ENCODE measurements at regions of chr5 and their contacts with region 1.

Region 1: DNA sequence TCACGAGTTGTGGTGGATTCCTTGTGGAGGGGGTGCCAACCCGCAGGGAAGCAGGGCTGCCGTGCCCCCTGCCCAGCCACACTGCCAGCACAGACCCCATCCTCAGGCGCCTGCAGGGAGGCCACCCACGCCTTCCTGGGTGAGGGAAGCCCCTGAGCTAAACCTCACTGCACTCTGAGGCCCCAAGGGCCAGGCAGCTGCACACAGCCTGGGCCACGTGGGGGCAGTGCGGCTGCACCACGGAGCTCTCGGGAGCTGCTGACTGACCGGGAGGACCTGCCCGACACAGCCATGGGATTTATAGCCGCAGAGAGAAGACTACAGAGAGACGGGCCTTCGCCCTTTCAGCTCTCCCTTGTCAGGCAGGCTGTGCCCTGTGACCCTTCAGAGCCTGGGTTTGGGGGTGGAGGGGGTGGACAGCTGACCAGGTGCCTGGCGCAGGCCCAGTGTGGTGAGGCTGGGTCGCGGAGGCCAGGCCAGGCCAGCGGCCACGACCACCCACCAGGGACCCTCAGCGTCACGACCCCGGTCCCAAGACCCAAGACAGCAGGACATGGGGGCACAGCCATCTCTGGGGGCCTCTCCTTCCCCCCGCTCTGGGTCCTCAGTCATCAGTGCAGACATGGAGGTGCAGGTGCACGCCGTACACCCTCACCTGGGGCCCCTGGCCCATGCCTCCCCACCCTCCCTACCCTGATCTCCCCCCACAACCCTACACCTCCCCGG is 4.3 kb upstream of the AHRR start:
- DNase-seq: peak in 5 of 9 experiments; percentile 40 to 67 (median 41)
- ATAC-seq: peak; percentile 73
- H3K4me3 ChIP-seq: no peak overlapping the region
- H3K4me3 Mint-ChIP-seq: no peak overlapping the region
- H3K27ac ChIP-seq: no peak overlapping the region
- H3K27ac Mint-ChIP-seq: no peak overlapping the region
- H3K4me1 ChIP-seq: peaks cover 5% of the 10 kb centered on the region
- H3K4me1 Mint-ChIP-seq: peaks cover 11% of the 10 kb centered on the region
- H3K27me3 ChIP-seq: peaks cover 9 to 16% of the 10 kb centered on the region in 2 experiments
- H3K27me3 Mint-ChIP-seq: peaks cover 11% of the 10 kb centered on the region
- CTCF ChIP-seq: peak; percentile 27

Region 2: DNA sequence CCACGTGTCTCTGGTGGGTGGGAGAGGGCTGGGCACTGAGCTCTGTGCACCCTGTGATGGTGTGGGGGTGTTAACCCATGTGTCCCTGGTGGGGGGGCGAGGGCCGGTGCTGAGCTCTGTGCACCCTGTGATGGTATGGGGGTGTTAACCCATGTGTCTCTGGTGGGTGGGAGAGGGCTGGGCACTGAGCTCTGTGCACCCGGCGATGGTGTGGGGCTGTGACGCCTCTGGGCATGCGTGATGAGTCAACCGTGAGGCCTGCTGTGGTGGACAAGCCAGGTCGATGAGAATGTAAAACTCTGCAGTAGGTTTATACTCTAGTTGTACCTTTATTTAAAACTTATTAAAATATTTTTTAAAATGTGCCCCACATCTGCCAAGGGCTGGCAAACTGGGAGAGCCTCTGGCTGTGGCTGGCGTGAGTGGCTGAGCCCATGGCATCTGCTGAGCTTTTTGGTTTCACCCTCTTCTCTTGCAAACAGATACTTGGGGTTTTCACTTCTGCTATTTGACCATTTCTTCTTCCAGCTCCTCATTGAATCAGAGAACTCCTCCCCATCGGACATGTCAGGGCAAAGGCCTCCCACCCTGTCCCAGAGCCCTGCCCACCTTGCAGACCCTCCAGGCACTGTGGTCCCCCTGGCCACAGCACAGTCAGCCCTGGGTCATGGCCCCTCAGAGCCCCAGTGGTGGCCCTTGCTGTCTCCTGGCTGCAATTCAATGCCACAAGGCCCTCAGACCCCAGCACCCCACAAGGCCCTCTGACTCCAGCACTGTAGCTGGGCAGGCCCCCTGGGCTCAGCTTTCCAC is 107.3 kb after region 1 on chr5:
- CTCF ChIA-PET with region 1: interaction called, 10 read pairs
- POLR2A ChIA-PET with region 1: no interaction called
- intact Hi-C with region 1: loop called in 1 of 2 experiments (anchors 1 kb)
- DNase-seq: no peak
- ATAC-seq: no peak
- H3K4me3 ChIP-seq: no peak overlapping the region
- H3K4me3 Mint-ChIP-seq: no peak overlapping the region
- H3K27ac ChIP-seq: no peak overlapping the region
- H3K27ac Mint-ChIP-seq: no peak overlapping the region
- H3K4me1 ChIP-seq: no peaks in the 10 kb centered on the region
- H3K4me1 Mint-ChIP-seq: no peaks in the 10 kb centered on the region
- H3K27me3 ChIP-seq: no peaks in the 10 kb centered on the region
- H3K27me3 Mint-ChIP-seq: peaks cover 7% of the 10 kb centered on the region
- CTCF ChIP-seq: no peak

Region 3: GRCh38 chr5:431001-431710 is 113.9 kb after region 1 on chr5:
- CTCF ChIA-PET with region 1: interaction called, 10 read pairs
- POLR2A ChIA-PET with region 1: no interaction called
- intact Hi-C with region 1: loop called in 1 of 2 experiments (anchors 2 kb)
- DNase-seq: peak in 8 of 9 experiments; percentile 10 to 64 (median 44)
- ATAC-seq: peak; percentile 59
- H3K4me3 ChIP-seq: no peak overlapping the region
- H3K4me3 Mint-ChIP-seq: no peak overlapping the region
- H3K27ac ChIP-seq: no peak overlapping the region
- H3K27ac Mint-ChIP-seq: no peak overlapping the region
- H3K4me1 ChIP-seq: no peaks in the 10 kb centered on the region
- H3K4me1 Mint-ChIP-seq: no peaks in the 10 kb centered on the region
- H3K27me3 ChIP-seq: no peaks in the 10 kb centered on the region
- H3K27me3 Mint-ChIP-seq: peaks cover 8% of the 10 kb centered on the region
- CTCF ChIP-seq: peak; percentile 60

Region 4: GRCh38 chr5:902129-902916 is 585.1 kb after region 1 on chr5:
- CTCF ChIA-PET with region 1: no interaction called
- POLR2A ChIA-PET with region 1: no interaction called
- intact Hi-C with region 1: loop called in 1 of 2 experiments (anchors 5 kb)
- DNase-seq: peak in 1 of 9 experiments; percentile 37
- ATAC-seq: no peak
- H3K4me3 ChIP-seq: no peak overlapping the region
- H3K4me3 Mint-ChIP-seq: no peak overlapping the region
- H3K27ac ChIP-seq: no peak overlapping the region
- H3K27ac Mint-ChIP-seq: no peak overlapping the region
- H3K4me1 ChIP-seq: no peaks in the 10 kb centered on the region
- H3K4me1 Mint-ChIP-seq: no peaks in the 10 kb centered on the region
- H3K27me3 ChIP-seq: no peaks in the 10 kb centered on the region
- H3K27me3 Mint-ChIP-seq: no peaks in the 10 kb centered on the region
- CTCF ChIP-seq: no peak

Measured in CD8-positive, alpha-beta T cell (primary cell).